ENCODE measurements at regions of chr4 and their contacts with region 1.

Region 1: DNA sequence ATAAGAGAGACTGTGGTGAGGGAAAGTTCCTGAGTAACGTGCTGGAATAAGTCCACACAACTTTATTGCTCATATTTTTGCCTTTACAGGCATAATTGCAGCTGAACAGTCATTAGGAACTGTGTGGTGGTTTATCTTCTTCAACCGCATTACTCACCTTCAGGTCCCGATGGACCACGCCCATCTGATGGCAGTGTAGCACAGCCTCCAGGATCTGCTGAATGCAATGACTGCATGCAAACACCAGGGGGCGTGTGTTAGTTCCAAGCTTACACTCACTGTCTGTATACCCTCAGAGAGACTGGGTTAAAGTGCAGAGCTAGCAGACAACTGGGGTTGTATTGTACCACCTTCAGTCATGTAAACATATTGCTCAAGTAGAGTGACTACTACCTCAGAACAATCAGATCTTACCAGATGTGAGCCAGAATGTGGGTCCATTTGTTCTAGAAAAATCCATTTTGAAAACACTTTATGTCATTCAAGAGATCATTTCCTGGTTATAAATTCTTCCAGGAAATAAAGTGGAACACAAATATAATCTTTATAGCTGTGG is 214.0 kb downstream of the CAMK2D start:
- DNase-seq: peak; percentile 76 to 83
- H3K4me3 ChIP-seq: no peak overlapping the region
- H3K27ac ChIP-seq: no peak overlapping the region
- H3K4me1 ChIP-seq: peaks cover 10% of the 10 kb centered on the region
- H3K27me3 ChIP-seq: no peaks in the 10 kb centered on the region
- CTCF ChIP-seq: peak; percentile 83

Region 2: DNA sequence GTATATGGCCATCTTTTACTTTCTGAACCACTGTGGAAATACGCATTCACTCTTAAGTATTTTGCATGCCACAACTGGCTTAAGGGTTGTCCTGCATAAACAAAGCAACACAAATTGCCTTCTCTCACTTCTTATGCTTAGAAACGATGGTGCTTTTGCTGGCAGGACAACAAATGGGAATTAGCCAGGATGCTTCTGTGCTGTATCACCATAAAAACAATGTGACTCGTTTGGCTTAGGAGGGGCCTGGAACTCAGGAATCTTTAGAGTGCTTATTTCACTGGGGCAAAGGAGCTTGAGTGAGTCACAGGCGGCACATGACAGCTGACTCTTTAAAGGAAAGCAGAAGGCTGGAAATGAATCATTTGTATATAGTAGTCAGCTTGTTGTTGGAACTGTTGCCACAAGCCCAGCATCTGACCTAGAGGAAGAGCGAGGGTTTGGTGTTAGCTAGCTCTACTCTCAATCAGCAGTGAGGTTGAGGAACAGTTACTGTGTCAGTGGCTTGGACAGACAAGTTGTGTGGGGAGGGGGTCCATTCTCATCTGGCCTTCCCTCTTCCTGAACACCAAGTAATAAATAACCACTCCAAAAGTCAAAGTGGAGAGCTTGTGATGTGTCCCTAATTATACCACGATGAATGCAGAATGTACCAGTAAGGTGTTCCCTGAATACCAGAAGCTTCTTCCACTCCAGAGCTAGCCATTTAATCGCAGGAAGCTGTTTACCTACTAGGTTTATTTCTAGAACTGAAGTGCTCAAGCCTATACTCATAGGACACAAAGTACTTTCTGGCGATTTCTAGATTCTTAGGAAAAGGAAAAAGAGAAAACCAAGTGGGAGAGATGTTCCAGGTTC is 79.2 kb before region 1 on chr4:
- CTCF ChIA-PET with region 1: no interaction called
- POLR2A ChIA-PET with region 1: no interaction called
- intact Hi-C with region 1: loop called (anchors 2 kb)
- DNase-seq: peak; percentile 60 to 92
- H3K4me3 ChIP-seq: peak overlapping the region; percentile 27; the same call in 1 of the 2 replicates
- H3K27ac ChIP-seq: peak overlapping the region; percentile 80
- H3K4me1 ChIP-seq: peaks cover 25% of the 10 kb centered on the region
- H3K27me3 ChIP-seq: no peaks in the 10 kb centered on the region
- CTCF ChIP-seq: no peak

Region 3: DNA sequence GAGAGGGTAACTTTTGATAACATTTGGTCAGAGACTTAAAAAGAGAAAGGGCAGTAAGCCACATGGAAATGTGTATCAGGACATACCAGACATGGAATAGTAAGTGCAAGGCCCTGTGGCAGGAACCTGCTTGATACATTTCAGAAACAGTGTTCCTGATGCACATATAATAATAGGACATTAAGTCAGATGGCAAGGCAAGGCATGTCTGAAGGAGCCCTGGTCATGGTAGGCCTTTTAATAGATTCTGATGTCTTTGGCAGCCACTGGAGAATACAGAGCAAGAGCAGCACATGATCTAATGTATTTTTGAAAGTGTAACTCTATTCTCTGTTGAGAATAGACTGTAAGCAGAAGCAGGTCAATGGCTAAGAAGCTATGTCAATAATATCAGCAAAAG is 65.7 kb before region 1 on chr4:
- CTCF ChIA-PET with region 1: no interaction called
- POLR2A ChIA-PET with region 1: no interaction called
- intact Hi-C with region 1: no loop called
- DNase-seq: no peak
- H3K4me3 ChIP-seq: no peak overlapping the region
- H3K27ac ChIP-seq: no peak overlapping the region
- H3K4me1 ChIP-seq: no peaks in the 10 kb centered on the region
- H3K27me3 ChIP-seq: no peaks in the 10 kb centered on the region
- CTCF ChIP-seq: no peak